ENCODE measurements at regions of chr16 and their contacts with region 1.

Region 1: GRCh38 chr16:70653809-70654771 is 7.7 kb downstream of the IL34 start:
- DNase-seq: peak; percentile 87
- ATAC-seq: peak; percentile 92
- H3K4me3 Mint-ChIP-seq: no peak overlapping the region
- H3K27ac Mint-ChIP-seq: no peak overlapping the region
- H3K4me1 Mint-ChIP-seq: peaks cover 4% of the 10 kb centered on the region
- H3K27me3 Mint-ChIP-seq: no peaks in the 10 kb centered on the region
- CTCF ChIP-seq: peak; percentile 94

Region 2: GRCh38 chr16:70601576-70602575 is 52.2 kb before region 1 on chr16:
- CTCF ChIA-PET with region 1: interaction called, 13 read pairs
- POLR2A ChIA-PET with region 1: interaction called, 5 read pairs
- intact Hi-C with region 1: no loop called
- DNase-seq: no peak
- ATAC-seq: no peak
- H3K4me3 Mint-ChIP-seq: no peak overlapping the region
- H3K27ac Mint-ChIP-seq: no peak overlapping the region
- H3K4me1 Mint-ChIP-seq: no peaks in the 10 kb centered on the region
- H3K27me3 Mint-ChIP-seq: no peaks in the 10 kb centered on the region
- CTCF ChIP-seq: no peak